Heart right ventricle (tissue), 16 donors: ENCODE measurements at regions of chr2 and their contacts with region 1.

Region 1: DNA sequence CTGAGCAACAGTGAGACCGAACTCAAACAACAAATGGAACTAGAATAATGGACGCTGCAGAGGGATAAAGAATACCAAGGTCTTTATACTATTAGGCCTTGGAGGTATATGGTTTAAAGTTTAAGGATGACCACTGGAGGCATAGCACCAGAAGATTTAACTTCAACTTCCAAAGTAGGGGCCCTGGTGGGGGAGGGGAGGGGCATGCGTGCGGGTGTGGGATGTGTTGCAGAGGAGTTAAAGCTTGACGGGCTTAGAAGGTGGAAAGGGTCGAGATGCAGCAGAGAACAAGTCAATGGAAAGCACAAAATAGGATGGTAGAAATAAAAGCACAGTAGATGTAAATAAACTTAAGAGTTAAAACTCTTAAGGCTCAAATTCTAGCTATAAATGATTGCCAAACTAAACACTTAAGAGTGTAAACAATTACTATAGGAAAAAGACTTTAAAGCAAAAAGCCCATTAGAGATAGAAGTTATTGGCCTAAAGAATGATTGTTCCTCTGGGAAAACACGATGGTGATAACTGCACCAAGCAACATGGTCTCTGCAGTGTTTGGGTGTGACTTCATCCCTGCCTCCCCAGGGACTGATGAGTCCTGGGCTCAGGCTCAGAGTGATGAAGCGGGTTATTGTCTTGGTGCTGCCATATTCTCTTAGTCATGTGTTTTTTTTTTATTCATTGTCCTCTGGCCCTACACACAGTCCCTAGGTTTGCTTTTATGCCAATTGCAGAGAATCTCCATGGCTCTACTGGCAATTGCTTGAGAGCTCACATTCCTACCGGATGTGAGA is 13.0 kb downstream of the RRM2 start:
- DNase-seq: no peak
- ATAC-seq: peak in 1 of 8 donors; percentile 71
- H3K4me3 ChIP-seq: no peak overlapping the region
- H3K27ac ChIP-seq: no peak overlapping the region
- H3K4me1 ChIP-seq: no peaks in the 10 kb centered on the region
- H3K27me3 ChIP-seq: no peaks in the 10 kb centered on the region
- CTCF ChIP-seq: no peak

Region 2: GRCh38 chr2:10424051-10424450 is 288.6 kb after region 1 on chr2:
- intact Hi-C with region 1: loop called in 1 of 10 experiments (anchors 5 kb)
- DNase-seq: no peak
- ATAC-seq: no peak
- H3K4me3 ChIP-seq: no peak overlapping the region
- H3K27ac ChIP-seq: no peak overlapping the region
- H3K4me1 ChIP-seq: no peaks in the 10 kb centered on the region
- H3K27me3 ChIP-seq: no peaks in the 10 kb centered on the region
- CTCF ChIP-seq: no peak